Psoas muscle (tissue), 8 donors: ENCODE measurements at regions of chr20 and their contacts with region 1.

Region 1: GRCh38 chr20:18566892-18567742 is at the start of gene SMIM26:
- DNase-seq: peak; percentile 95 to 97
- ATAC-seq: peak; percentile 99 to 100 (median 100)
- H3K4me3 ChIP-seq: peak within 1 kb of the TSS; percentile 95
- H3K27ac ChIP-seq: peak within 1 kb of the TSS; percentile 87
- H3K4me1 ChIP-seq: peaks cover 6% of the 10 kb centered on the region
- H3K27me3 ChIP-seq: no peaks in the 10 kb centered on the region
- CTCF ChIP-seq: no peak
- total RNA-seq, gene SMIM26: 107 to 163 (median 133) TPM

Region 2: GRCh38 chr20:18507218-18508021 is 59.7 kb before region 1 on chr20 and contains the start of gene SEC23B:
- intact Hi-C with region 1: loop called in 1 of 2 experiments (anchors 5 kb)
- DNase-seq: peak; percentile 97
- ATAC-seq: peak; percentile 98 to 99 (median 98)
- H3K4me3 ChIP-seq: peak within 1 kb of the TSS; percentile 95
- H3K27ac ChIP-seq: peak within 1 kb of the TSS; percentile 98
- H3K4me1 ChIP-seq: peaks cover 11% of the 10 kb centered on the region
- H3K27me3 ChIP-seq: no peaks in the 10 kb centered on the region
- CTCF ChIP-seq: no peak
- total RNA-seq, gene SEC23B: 6.1 to 9.5 (median 7.8) TPM

Region 3: DNA sequence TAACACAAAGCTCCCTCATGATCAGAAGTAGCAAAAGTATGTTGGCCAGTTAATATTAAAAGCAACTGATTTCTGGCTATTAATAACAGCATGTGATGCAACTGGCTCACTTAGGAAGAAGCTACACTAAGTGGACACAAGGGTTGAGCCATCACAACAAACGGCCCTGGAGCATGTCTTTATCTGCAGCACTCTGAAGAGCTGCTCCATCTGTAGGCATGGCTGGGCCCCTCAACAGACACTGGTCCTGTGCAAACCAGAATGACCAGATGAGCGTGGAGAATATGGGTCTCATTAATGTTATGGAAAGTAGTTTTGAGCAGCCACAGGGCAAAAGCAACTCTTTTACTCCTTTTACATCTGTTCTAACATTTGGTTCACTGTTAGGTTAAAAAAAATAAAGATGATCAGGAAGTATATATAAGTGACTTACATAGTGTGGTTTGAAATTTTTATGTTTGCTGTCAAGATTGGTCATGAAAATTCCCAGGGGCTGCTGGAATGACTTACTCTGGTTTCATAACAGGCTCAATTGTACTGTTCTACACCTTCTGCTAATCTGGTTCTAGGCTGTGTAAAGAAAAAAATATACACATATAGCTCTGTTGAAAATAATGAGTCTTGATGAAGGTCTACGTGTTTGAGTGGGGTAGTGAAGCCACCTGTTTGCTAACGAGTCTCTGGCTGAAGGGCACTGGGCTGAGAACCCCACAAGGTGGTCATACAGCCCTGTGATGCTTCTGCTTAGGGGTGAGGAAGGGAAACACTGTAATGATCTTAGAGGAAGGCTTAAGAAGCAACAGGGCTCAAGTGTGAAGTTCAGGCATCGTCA is 1858.9 kb after region 1 on chr20:
- intact Hi-C with region 1: loop called in 1 of 2 experiments (anchors 10 kb)
- DNase-seq: no peak
- ATAC-seq: peak; percentile 47 to 75 (median 64)
- H3K4me3 ChIP-seq: no peak overlapping the region
- H3K27ac ChIP-seq: no peak overlapping the region
- H3K4me1 ChIP-seq: peaks cover 5% of the 10 kb centered on the region
- H3K27me3 ChIP-seq: no peaks in the 10 kb centered on the region
- CTCF ChIP-seq: no peak